Posterior vena cava (tissue), 2 donors: ENCODE measurements at regions of chr2 and their contacts with region 1.

Region 1: GRCh38 chr2:237408335-237409000 is 5.5 kb downstream of the COL6A3 start:
- DNase-seq: peak; percentile 87

Region 2: DNA sequence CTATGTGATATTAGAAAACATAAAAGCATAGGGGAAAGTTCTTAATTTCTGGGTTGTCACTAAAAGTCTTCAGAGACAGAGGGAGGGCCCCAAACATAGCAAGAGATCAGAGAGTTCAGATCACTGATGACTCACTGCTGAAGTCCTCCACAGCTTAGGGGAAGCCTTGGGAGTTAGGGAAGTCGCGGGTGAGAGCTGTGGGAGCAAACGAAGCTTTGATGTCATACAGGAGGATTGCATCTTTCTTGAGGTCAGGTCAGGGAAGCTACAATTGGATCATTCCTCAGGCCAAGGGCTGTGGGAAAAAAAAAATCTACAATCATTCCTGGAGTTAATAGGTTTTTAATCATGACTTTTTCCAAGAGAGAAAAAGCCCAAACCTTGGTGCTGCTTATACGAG is 226.6 kb before region 1 on chr2:
- intact Hi-C with region 1: loop called (anchors 5 to 10 kb)
- DNase-seq: no peak